Activated T-helper 2 cell treated with anti-CD3 and anti-CD28 coated beads, Interferon-gamma antibody, Interleukin-2, Interleukin-4, amounts not matched to agents 10 μg/mL and 5 μg/mL and 100 μg/mL, durations not matched to agents 14 hours and 24 hours and 36 hours (primary cell): ENCODE measurements at regions of chr11 and their contacts with region 1.

Region 1: GRCh38 chr11:10808553-10809372 is at the start of gene EIF4G2:
- DNase-seq: peak; percentile 98
- H3K4me3 Mint-ChIP-seq: peak within 1 kb of the TSS; percentile 94
- H3K27ac Mint-ChIP-seq: peak within 1 kb of the TSS; percentile 98
- H3K4me1 Mint-ChIP-seq: peaks cover 33% of the 10 kb centered on the region
- H3K27me3 Mint-ChIP-seq: peaks cover 2% of the 10 kb centered on the region
- total RNA-seq, gene EIF4G2: 1,057 and 1,120 TPM in 2 replicates

Region 2: DNA sequence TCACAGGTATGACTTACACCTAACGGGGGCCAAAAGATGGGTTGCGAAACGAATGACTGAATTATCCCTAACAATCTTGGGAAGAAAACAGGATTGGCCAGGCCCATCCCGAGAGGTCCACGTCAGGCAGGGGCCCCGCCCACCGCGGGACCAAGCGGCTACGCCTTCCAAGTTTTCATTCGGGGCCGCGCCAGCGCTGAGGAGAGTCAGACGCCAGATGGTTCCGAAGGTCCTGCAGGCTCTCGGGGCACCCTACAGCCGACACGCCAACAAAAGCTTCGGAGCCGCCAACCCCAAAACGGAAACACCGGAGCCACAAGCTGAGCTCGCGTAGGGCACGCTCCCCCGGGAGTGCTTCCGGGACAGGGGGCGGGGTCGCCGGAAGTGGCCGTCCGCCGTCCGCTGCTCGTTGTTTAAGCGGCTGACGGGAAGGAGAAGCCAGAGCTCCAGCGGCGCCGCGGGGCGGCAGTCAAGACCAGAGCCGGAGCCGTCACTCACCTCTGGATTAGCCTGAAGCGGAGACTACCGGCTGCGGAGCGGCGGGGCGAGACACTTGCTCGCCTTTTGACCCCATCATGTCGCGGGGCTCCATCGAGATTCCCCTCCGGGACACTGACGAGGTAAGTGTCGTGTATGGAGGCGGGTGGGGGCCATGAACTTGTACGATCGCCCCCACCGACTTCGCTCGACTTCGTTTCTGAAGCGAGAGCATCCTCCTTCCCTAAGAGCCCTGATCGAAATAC is 57.8 kb before region 1 on chr11 and contains the start of gene CTR9:
- intact Hi-C with region 1: loop called (anchors 1 kb)
- DNase-seq: peak; percentile 91
- H3K4me3 Mint-ChIP-seq: peak within 1 kb of the TSS; percentile 92
- H3K27ac Mint-ChIP-seq: peak within 1 kb of the TSS; percentile 86
- H3K4me1 Mint-ChIP-seq: peaks cover 32% of the 10 kb centered on the region
- H3K27me3 Mint-ChIP-seq: no peaks in the 10 kb centered on the region
- total RNA-seq, gene CTR9: 41.5 and 43.5 TPM in 2 replicates

Region 3: DNA sequence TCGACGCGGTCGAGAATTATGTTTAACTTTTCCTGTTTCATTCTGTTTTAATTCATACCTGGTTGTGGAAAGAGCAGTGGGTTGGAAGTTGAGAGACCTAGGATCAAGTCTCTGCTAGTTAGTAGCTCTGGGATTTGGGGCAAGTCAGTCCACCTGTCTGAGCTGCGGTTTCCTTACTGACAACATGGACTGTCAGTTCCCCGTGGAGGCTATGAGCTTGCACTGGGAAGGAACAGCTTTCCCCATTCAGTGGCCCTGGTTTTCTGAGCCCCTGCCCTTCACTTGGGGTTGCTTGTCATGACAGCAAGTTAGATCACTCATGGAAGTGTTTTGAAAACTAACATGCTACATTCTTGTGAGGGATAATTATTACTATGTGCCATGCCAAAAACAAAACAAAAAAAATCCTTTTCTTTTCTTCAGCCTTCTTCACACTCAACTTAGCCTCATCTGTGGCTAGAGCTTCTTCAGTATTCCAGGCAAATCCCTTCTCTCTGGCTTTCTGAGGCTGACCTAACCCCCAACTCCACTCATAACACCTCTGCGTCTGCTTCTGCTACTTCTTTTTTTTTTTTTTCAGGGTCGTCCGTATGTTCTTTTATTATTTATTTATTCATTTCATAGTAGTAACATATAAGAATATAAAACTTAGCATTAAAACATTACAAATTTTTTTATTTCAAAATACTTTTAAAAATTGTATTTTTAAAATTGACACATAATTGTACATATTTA is 92.1 kb after region 1 on chr11:
- intact Hi-C with region 1: loop called (anchors 1 kb)
- DNase-seq: no peak
- H3K4me3 Mint-ChIP-seq: no peak overlapping the region
- H3K27ac Mint-ChIP-seq: peak overlapping the region; percentile 84
- H3K4me1 Mint-ChIP-seq: peaks cover 22% of the 10 kb centered on the region
- H3K27me3 Mint-ChIP-seq: no peaks in the 10 kb centered on the region